GM10248 (cell line): ENCODE measurements at regions of chrX and their contacts with region 1.

Region 1: DNA sequence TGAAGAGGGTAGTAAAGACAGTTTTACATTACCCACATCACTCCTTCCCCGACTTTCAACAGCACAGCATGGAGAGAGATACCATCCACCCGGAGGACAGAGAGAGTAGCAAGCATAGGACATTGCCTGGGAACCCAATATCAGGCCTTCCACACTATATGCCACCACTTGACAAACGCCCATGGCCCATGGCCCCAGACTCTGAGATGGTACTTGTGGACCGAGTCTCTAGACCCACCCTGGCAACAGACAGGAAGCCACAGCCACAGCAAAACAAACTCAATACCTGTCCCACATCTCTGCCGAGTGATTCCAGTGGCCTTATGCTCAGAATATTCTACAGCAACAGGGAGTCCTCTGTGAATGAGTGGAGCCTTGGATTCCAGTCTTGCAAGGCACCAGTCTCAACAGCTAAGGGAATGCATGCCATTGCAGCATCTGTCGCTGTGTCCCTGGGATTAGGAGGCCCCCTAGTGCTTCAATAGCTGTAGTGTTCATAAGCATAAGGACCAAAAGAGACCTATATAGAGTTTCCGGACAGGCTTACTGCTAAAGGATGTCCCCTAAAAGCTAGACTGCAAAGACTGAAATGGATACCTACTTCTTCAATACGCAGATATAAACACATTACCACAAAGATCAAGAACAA is 14.7 kb upstream of the CT55 start:
- DNase-seq: peak; percentile 49
- CTCF ChIP-seq: peak; percentile 43

Region 2: GRCh38 chrX:135315864-135316263 is 129.9 kb after region 1 on chrX:
- CTCF ChIA-PET with region 1: no interaction called
- POLR2A ChIA-PET with region 1: no interaction called
- DNase-seq: no peak
- CTCF ChIP-seq: no peak

Region 3: GRCh38 chrX:135481708-135482107 is 295.8 kb after region 1 on chrX:
- CTCF ChIA-PET with region 1: interaction called, 11 read pairs
- POLR2A ChIA-PET with region 1: no interaction called
- DNase-seq: no peak
- CTCF ChIP-seq: no peak